ENCODE measurements at regions of chr14 and their contacts with region 1.

Region 1: DNA sequence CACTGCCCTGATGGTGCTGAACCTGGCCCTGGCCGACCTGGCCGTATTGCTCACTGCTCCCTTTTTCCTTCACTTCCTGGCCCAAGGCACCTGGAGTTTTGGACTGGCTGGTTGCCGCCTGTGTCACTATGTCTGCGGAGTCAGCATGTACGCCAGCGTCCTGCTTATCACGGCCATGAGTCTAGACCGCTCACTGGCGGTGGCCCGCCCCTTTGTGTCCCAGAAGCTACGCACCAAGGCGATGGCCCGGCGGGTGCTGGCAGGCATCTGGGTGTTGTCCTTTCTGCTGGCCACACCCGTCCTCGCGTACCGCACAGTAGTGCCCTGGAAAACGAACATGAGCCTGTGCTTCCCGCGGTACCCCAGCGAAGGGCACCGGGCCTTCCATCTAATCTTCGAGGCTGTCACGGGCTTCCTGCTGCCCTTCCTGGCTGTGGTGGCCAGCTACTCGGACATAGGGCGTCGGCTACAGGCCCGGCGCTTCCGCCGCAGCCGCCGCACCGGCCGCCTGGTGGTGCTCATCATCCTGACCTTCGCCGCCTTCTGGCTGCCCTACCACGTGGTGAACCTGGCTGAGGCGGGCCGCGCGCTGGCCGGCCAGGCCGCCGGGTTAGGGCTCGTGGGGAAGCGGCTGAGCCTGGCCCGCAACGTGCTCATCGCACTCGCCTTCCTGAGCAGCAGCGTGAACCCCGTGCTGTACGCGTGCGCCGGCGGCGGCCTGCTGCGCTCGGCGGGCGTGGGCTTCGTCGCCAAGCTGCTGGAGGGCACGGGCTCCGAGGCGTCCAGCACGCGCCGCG is 4.7 kb downstream of the LTB4R start:
- DNase-seq: peak; percentile 65
- ATAC-seq: peak; percentile 81
- H3K4me3 ChIP-seq: peak overlapping the region; percentile 29 to 73 (median 40)
- H3K27ac ChIP-seq: peak overlapping the region; percentile 18
- H3K4me1 ChIP-seq: peaks cover 37% of the 10 kb centered on the region
- H3K27me3 ChIP-seq: peaks cover 6 to 39% of the 10 kb centered on the region in 2 experiments; a peak in 4 of 5 replicates
- CTCF ChIP-seq: peak; percentile 88
- EP300 ChIP-seq: 0 out of 4 replicates have a peak, but pooled peaks of 1 of the 2 experiments have one; percentile 9
- POLR2A ChIP-seq: no peak; a peak in 2 of 4 replicates
- RAD21 ChIP-seq: peak; percentile 72

Region 2: DNA sequence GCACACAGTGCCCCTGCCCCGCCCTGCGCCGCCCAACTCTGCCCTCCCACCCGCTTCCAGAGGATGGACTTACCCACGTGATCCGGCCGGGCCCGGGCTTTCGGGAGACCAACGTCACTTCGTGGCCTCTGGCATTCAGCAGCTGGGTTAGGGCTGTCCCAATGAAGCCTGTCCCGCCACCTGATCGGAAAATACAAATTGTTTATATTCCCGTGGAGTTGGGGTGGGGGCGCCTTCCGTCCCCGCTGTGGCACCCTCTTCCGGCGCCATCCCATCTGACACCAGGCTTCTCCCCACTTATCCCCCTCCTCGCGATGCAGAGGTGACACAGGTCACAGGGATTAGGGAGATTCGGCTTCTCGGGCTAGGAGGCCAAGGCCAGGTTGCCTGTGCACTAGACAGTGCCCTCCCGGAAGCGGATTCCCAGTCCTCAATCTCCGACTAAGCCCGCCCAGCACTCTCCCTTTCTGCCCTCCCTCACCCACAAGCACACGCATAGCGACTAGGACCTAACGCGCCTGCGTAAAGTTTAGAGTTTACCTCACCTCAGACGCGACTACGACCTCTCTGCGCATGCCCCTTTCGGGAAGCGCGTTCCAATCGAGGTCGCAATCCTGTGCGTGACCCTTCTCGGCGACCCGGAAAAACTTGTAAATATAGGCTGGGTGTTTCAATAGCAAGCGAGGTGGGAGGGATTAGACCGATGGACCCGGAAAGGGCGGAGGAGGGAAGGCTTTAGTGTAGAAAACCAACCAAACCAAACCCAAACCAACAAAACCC is 126.5 kb after region 1 on chr14 and contains the start of gene SDR39U1:
- CTCF ChIA-PET with region 1: no interaction called
- POLR2A ChIA-PET with region 1: interaction called, 13 read pairs
- in situ Hi-C with region 1: no loop called
- intact Hi-C with region 1: no loop called
- DNase-seq: peak; percentile 100
- ATAC-seq: peak; percentile 91
- H3K4me3 ChIP-seq: peak within 1 kb of the TSS; percentile 74 to 98 (median 84)
- H3K27ac ChIP-seq: peak within 1 kb of the TSS; percentile 93
- H3K4me1 ChIP-seq: peaks cover 18% of the 10 kb centered on the region
- H3K27me3 ChIP-seq: peaks cover 0 to 5% of the 10 kb centered on the region in 2 experiments; a peak in 1 of 5 replicates
- CTCF ChIP-seq: peak; percentile 50
- EP300 ChIP-seq: 0 out of 4 replicates have a peak, but pooled peaks have one; percentile 44 to 47
- POLR2A ChIP-seq: peak in 1 of 2 experiments; percentile 98; a peak in 2 of 4 replicates
- RAD21 ChIP-seq: no peak; the same call in 1 of the 2 replicates
- total RNA-seq, gene SDR39U1: 25.0 and 34.4 TPM in 2 replicates